ENCODE measurements at regions of chr17 and their contacts with region 1.

Region 1: GRCh38 chr17:29180034-29180787 is at the start of gene MYO18A:
- DNase-seq: peak; percentile 96
- H3K4me3 ChIP-seq: peak within 1 kb of the TSS; percentile 59 to 64
- H3K27ac ChIP-seq: peak within 1 kb of the TSS; percentile 51 to 80
- H3K4me1 ChIP-seq: peaks cover 17 to 36% of the 10 kb centered on the region in 2 experiments; a peak in 1 of 4 replicates
- H3K27me3 ChIP-seq: no peaks in the 10 kb centered on the region
- CTCF ChIP-seq: peak; percentile 67
- EP300 ChIP-seq: no peak
- RAD21 ChIP-seq: peak; percentile 55
- polyA plus RNA-seq, gene MYO18A: 6.0 and 6.6 TPM in 2 replicates

Region 2: DNA sequence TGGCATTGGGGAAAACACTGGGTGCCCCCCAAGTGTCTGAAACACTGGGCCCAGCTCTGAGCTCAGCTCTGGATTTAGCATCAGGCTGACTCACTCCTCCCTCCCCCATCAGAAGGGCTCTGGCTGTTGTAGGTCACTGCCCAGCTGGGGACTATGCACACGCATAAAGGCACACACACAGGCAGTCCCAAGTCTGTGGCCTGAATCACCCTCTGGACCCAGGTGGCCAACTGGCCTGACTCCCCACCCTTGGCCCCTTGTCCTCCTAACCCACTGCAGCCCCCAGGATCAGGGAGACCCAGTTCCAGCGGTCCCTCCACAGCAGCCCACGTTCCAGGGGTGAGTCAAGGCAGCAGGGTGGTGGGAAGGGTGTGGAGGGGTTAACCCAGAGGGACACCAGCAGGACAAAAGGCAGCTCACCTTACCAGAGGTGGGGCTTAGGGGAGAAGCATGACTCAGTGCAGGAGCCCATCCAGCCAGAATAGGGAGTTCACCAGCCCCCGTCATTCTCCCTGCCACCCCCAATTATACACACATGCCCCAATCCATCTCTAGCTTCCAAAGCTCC is 47.0 kb before region 1 on chr17:
- CTCF ChIA-PET with region 1: interaction called, 11 read pairs
- POLR2A ChIA-PET with region 1: no interaction called
- DNase-seq: no peak
- H3K4me3 ChIP-seq: no peak overlapping the region
- H3K27ac ChIP-seq: peak overlapping the region; percentile 50 to 62; a peak in 2 of 4 replicates
- H3K4me1 ChIP-seq: peaks cover 20 to 27% of the 10 kb centered on the region in 2 experiments
- H3K27me3 ChIP-seq: no peaks in the 10 kb centered on the region
- CTCF ChIP-seq: no peak
- EP300 ChIP-seq: no peak
- RAD21 ChIP-seq: no peak

Region 3: DNA sequence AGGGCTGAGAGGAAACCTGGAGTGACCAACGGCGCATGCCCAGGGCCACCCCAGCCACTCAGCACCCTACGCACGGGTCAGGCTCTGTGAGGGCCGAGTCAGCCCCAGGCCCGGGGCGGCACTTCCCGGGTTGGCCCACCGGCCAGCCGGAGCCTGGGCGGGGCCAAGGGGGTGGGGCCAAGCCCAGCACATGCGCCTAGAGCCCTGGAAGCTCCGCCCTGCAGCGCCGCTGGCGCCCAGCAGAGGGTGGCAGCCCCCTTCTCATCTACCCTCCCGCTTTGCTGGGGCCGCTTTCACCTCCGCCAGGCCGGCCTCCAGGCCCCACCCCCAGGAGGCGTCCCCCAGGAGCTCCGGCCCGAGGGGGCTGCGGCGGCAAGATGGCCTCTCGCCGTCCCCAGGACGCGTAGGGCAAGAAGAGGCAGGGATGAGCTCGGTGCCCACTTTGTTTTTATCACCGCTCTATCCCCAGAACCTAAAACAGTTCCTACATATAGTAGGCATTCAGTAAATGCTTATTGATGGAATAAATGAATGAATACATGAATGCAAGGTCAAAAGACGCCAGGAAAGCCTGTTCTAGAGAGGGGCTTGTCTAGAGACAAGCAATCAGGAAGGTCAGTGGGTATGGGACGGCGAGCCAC is 31.3 kb before region 1 on chr17:
- CTCF ChIA-PET with region 1: interaction called, 276 read pairs
- POLR2A ChIA-PET with region 1: interaction called, 15 read pairs
- DNase-seq: peak; percentile 99
- H3K4me3 ChIP-seq: peak overlapping the region; percentile 47 to 50
- H3K27ac ChIP-seq: peak overlapping the region; percentile 50 to 82; a peak in 3 of 4 replicates
- H3K4me1 ChIP-seq: peaks cover 30 to 35% of the 10 kb centered on the region in 2 experiments
- H3K27me3 ChIP-seq: no peaks in the 10 kb centered on the region
- CTCF ChIP-seq: peak; percentile 81
- EP300 ChIP-seq: 0 out of 4 replicates have a peak, but pooled peaks of 1 of the 2 experiments have one; percentile 17
- RAD21 ChIP-seq: peak; percentile 91

Region 4: DNA sequence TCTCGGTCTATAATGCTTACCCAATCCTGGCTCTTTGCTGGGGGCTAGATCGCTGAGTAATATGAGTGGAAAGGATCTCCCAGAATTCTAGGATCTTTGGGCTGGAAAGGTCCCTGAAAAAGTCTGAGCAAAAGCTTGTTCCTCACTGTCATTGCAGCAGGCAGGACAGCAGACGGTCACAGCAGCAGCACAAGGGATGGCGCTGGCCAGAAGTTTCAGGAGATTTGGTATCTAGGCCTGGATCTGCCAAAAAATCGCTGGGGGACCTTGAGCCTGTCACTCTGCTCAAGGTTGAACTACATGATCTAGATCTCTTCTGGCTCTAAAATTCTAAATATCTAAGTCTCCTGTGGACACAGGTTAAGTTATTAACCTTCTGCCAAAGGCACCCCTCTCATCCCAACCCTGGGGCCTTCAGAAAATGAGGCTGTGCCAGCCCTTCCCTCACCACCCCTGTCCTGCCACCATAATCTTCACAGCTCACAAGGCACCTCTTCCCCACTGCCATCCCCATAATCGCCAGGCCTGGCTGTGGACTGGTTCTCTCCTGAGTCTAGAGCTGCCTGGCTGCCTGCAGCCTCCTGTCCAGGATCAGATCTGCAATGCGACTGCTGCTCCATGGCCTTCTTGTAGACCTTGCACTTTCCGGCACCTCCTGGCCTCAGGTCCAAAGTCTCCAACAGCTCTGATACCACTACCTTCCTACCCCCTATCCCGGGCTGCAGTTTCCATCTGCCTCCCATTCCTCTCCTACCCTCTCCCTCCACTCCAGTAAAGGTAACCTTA is 10.2 kb before region 1 on chr17:
- CTCF ChIA-PET with region 1: interaction called, 49 read pairs
- POLR2A ChIA-PET with region 1: no interaction called
- DNase-seq: no peak
- H3K4me3 ChIP-seq: no peak overlapping the region
- H3K27ac ChIP-seq: no peak overlapping the region
- H3K4me1 ChIP-seq: no peaks in the 10 kb centered on the region; a peak in 2 of 4 replicates
- H3K27me3 ChIP-seq: no peaks in the 10 kb centered on the region
- CTCF ChIP-seq: no peak
- EP300 ChIP-seq: no peak
- RAD21 ChIP-seq: no peak

Region 5: DNA sequence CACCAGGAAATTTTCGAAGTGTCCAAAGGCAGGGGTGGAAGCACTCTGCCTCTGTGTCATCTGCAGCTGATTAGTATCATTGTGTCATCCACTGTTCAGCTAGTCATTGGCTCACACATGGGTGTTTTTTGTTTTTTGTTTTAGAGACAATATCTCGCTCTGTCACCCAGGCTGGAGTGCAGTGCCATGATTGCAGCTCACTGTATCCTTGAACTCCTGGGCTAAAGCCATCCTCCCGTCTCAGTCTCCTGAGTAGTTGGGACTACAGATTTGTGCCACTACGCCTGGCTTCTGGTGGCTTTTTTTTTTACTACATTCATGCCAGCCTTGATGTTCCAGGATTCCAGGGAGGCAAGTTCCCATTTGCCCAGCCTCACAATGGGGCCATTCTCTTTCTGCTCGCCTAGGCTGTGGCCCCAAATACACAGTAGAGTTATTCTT is 32.5 kb after region 1 on chr17:
- CTCF ChIA-PET with region 1: interaction called, 56 read pairs
- POLR2A ChIA-PET with region 1: no interaction called
- DNase-seq: no peak
- H3K4me3 ChIP-seq: no peak overlapping the region
- H3K27ac ChIP-seq: no peak overlapping the region
- H3K4me1 ChIP-seq: no peaks in the 10 kb centered on the region; a peak in 1 of 4 replicates
- H3K27me3 ChIP-seq: no peaks in the 10 kb centered on the region
- CTCF ChIP-seq: no peak
- EP300 ChIP-seq: no peak
- RAD21 ChIP-seq: no peak